ENCODE measurements at regions of chr16 and their contacts with region 1.

Region 1: GRCh38 chr16:425082-425718 is at the start of gene RAB11FIP3:
- DNase-seq: peak; percentile 94
- H3K4me3 ChIP-seq: peak within 1 kb of the TSS; percentile 89
- H3K27ac ChIP-seq: peak within 1 kb of the TSS; percentile 59
- H3K4me1 ChIP-seq: peaks cover 8% of the 10 kb centered on the region
- H3K27me3 ChIP-seq: no peaks in the 10 kb centered on the region
- CTCF ChIP-seq: peak; percentile 41
- total RNA-seq, gene RAB11FIP3: 44.8 and 44.9 TPM in 2 replicates

Region 2: GRCh38 chr16:450385-451134 is 25.4 kb after region 1 on chr16:
- CTCF ChIA-PET with region 1: no interaction called
- POLR2A ChIA-PET with region 1: interaction called, 12 read pairs
- intact Hi-C with region 1: no loop called
- DNase-seq: no peak
- H3K4me3 ChIP-seq: no peak overlapping the region
- H3K27ac ChIP-seq: no peak overlapping the region
- H3K4me1 ChIP-seq: peaks cover 5% of the 10 kb centered on the region
- H3K27me3 ChIP-seq: no peaks in the 10 kb centered on the region
- CTCF ChIP-seq: no peak

Region 3: DNA sequence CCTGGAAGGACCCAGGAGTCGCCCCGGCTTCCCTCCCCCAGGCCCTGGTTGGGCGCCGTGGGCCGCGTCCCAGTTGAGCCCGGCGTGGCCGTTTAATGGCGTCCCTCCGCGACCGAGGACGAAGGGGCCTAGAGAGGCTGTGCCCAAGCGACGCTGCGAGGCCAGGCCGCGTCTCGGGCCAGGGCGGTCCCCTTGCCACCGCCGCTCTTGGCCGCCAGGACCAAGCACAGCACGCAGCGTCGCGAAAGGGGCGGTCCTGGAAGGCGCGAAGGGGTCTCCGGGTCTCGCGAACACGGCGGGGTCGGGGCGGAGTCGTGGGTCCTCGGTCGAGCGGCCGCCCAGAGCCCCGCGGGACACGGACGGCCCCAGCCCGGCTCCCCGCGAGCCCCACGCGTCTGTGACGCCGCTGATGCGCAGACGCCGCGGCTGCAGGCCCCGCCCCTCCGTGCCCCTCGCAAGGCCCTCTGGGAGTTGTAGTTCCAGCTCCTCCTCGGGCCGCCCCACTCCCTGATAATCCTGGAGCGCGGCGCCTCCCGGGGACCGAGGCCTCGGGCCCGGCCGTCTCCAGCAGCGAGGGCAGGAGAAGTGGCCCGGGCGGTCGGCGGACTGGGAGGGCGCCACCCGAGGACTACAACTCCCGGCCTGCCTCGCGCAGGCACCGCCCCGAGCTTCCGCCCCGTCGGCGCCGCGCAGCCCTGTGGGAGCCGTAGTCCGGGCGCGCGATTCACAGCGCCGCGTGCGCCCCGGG is 102.0 kb after region 1 on chr16 and contains the start of gene CAPN15:
- CTCF ChIA-PET with region 1: no interaction called
- POLR2A ChIA-PET with region 1: interaction called, 13 read pairs
- intact Hi-C with region 1: no loop called
- DNase-seq: peak; percentile 93
- H3K4me3 ChIP-seq: peak within 1 kb of the TSS; percentile 96
- H3K27ac ChIP-seq: peak within 1 kb of the TSS; percentile 98
- H3K4me1 ChIP-seq: peaks cover 7% of the 10 kb centered on the region
- H3K27me3 ChIP-seq: no peaks in the 10 kb centered on the region
- CTCF ChIP-seq: no peak
- total RNA-seq, gene CAPN15: 77.7 and 91.2 TPM in 2 replicates

Measured in A673 (cell line).